Colonic mucosa (tissue), 4 donors: ENCODE measurements at regions of chr4 and their contacts with region 1.

Region 1: DNA sequence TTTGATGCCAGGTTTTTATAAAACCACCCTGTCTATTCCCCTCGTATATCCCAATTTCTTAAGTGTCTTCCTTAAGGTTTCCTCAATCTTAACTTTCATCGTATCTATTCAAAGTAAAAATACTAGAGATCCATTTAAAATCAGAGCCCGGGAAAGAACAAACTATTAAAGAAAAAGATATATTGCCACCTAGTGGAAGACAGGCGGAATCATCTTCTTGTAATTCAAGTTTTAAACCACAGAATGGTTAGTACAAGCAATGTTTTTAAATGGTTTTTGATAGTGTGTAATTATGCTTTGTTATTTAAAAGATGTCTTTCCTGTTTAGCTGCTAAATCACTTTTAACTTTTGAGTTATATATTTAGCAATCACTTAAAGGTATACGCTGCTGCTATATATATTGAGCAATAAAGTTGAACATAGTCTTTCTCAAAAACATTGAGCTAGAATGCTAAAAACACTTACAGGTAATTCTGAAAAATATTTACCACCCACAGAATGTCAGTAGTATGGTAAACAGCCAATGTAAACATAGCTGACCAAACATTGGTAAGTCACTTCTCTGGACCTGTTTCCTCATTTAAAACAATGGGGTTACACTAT is 18.2 kb downstream of the PRDM8 start:
- DNase-seq: no peak
- H3K4me3 ChIP-seq: no peak overlapping the region
- H3K27ac ChIP-seq: no peak overlapping the region
- H3K4me1 ChIP-seq: no peaks in the 10 kb centered on the region
- H3K27me3 ChIP-seq: peaks cover 8% of the 10 kb centered on the region
- CTCF ChIP-seq: peak; percentile 67

Region 2: DNA sequence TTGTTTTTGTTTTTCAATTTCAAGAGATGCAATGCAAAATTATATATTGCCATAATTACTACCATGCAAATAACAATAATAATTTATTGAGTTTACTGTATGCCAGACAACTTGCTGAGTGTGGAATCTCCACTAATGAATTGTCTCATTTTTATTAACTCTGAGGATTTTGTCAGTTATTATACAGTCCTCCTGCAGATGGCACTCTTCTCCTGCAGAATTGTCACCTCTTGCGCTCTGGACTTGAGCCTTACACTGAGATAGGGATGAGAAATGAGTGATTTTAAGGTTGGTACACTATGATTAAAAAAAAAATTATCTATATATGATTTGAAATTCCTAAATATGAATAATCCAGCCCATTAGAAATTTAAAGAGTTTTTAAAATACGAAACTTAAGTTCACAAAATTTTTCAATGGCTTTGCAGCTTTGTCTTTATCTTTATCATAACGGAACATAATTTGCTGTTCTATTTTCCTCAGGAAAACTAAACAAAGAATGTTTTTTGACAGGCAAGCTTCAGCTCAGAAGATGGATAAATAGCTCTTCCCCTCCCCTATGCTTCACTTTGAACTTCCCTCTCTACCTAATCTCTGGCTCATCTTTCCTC is 1263.6 kb before region 1 on chr4:
- intact Hi-C with region 1: loop called (anchors 5 kb)
- DNase-seq: no peak
- H3K4me3 ChIP-seq: no peak overlapping the region
- H3K27ac ChIP-seq: no peak overlapping the region
- H3K4me1 ChIP-seq: no peaks in the 10 kb centered on the region
- H3K27me3 ChIP-seq: no peaks in the 10 kb centered on the region
- CTCF ChIP-seq: peak; percentile 44

Region 3: GRCh38 chr4:79042079-79042674 is 1173.4 kb before region 1 on chr4:
- intact Hi-C with region 1: loop called (anchors 10 kb)
- DNase-seq: peak; percentile 35
- H3K4me3 ChIP-seq: no peak overlapping the region
- H3K27ac ChIP-seq: no peak overlapping the region
- H3K4me1 ChIP-seq: no peaks in the 10 kb centered on the region
- H3K27me3 ChIP-seq: no peaks in the 10 kb centered on the region
- CTCF ChIP-seq: peak; percentile 43